ENCODE measurements at regions of chr19 and their contacts with region 1.

Region 1: DNA sequence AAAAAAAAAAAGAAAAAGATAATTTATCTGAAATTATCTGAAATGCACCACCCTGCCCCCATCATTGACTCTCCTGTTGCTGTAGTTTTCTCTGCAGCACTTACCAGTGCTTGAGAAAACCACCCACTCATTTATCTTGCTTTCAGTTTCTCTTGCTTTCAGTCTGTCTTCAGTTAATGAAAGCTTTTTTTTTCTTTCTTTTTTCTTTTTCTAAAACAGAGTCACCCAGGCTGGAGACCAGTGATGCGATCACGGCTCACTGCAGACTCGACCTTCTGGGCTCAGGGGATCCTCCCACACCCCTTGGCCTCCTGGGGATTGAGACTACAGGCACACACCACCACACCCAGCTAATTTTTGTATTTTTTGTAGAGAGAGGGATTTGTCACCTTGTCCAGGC is 4.3 kb upstream of the ACP5 start:
- DNase-seq: peak; percentile 72
- ATAC-seq: peak; percentile 88
- H3K4me3 Mint-ChIP-seq: peak overlapping the region; percentile 73
- H3K27ac Mint-ChIP-seq: peak overlapping the region; percentile 81
- H3K4me1 Mint-ChIP-seq: peaks cover 86% of the 10 kb centered on the region
- H3K27me3 Mint-ChIP-seq: no peaks in the 10 kb centered on the region
- CTCF ChIP-seq: no peak

Region 2: DNA sequence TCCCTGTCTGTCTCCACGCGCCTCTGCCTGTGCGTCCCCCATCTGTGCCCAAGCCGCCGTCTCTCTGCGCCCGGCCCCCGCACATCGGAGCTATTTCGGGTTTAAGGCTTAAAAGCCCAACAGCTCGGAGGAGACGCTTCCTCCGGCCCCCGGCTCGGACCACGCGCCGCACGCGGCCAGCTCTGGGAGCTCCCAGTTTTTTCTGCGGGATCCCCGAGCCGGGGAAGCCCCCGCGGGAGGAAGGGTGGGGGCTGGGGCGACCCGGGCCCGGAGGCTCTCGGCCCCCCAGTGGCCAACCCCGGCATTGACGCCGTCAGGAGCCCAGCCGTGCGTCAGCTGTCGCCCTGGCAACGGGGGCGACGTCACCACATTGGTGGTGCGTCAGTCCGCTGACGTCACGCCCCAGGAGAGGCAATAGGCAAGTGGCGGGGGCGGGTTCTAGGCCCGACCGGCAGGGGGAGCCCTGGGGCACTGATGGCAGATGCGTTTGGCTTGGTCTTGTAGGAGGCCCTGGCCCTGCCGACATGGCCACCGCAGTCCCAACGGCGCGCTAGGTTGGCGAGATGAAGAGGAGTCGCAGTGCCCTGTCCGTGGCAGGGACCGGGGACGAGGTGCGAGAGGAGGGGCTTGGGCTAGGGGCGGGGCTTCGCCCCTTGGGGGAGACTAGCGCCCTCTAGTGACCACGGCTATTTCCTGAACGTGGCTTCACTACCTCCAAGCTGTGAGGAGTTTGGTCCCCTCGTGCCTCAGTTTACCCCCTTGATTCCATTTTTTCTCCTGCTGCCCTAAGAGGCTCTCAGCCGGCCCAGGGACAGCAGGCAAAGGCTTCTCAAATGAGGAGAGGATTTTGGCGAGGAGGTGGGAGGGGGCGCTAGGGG is 1165.1 kb before region 1 on chr19:
- CTCF ChIA-PET with region 1: no interaction called
- POLR2A ChIA-PET with region 1: interaction called, 12 read pairs
- intact Hi-C with region 1: no loop called
- DNase-seq: peak; percentile 97
- ATAC-seq: peak; percentile 68
- H3K4me3 Mint-ChIP-seq: peak overlapping the region; percentile 78
- H3K27ac Mint-ChIP-seq: peak overlapping the region; percentile 80
- H3K4me1 Mint-ChIP-seq: peaks cover 70% of the 10 kb centered on the region
- H3K27me3 Mint-ChIP-seq: peaks cover 29% of the 10 kb centered on the region
- CTCF ChIP-seq: peak; percentile 79

Measured in activated B cell treated with CpG ODN at 0.5 μM for 24 hours (primary cell).